Mucosa of descending colon (tissue), 3 donors: ENCODE measurements at regions of chr16 and their contacts with region 1.

Region 1: GRCh38 chr16:19886073-19886941 is 1.7 kb upstream of the GPRC5B start:
- DNase-seq: peak; percentile 61 to 89 (median 86)
- ATAC-seq: peak; percentile 80
- H3K4me3 ChIP-seq: no peak overlapping the region
- H3K4me1 ChIP-seq: peaks cover 16% of the 10 kb centered on the region
- CTCF ChIP-seq: peak; percentile 98

Region 2: GRCh38 chr16:19555162-19555937 is 331.0 kb before region 1 on chr16 and contains the start of gene VPS35L:
- intact Hi-C with region 1: loop called (anchors 5 kb)
- DNase-seq: peak; percentile 98 to 99 (median 99)
- ATAC-seq: peak; percentile 99
- H3K4me3 ChIP-seq: peak within 1 kb of the TSS; percentile 65
- H3K4me1 ChIP-seq: peaks cover 11% of the 10 kb centered on the region
- CTCF ChIP-seq: peak; percentile 76
- total RNA-seq, gene VPS35L: 47.2 to 61.7 (median 61.4) TPM

Region 3: GRCh38 chr16:19583665-19584300 is 302.5 kb before region 1 on chr16:
- intact Hi-C with region 1: loop called in 1 of 2 experiments (anchors 10 kb)
- DNase-seq: peak in 1 of 3 donors; percentile 48
- ATAC-seq: peak; percentile 87
- H3K4me3 ChIP-seq: no peak overlapping the region
- H3K4me1 ChIP-seq: no peaks in the 10 kb centered on the region
- CTCF ChIP-seq: peak; percentile 56

Region 4: GRCh38 chr16:19601083-19601976 is 285.0 kb before region 1 on chr16:
- intact Hi-C with region 1: loop called in 1 of 2 experiments (anchors 5 kb)
- DNase-seq: peak in 1 of 3 donors; percentile 58
- ATAC-seq: no peak
- H3K4me3 ChIP-seq: no peak overlapping the region
- H3K4me1 ChIP-seq: no peaks in the 10 kb centered on the region
- CTCF ChIP-seq: no peak

Region 5: GRCh38 chr16:19717771-19718602 is 168.3 kb before region 1 on chr16 and contains the starts of genes IQCK and KNOP1:
- intact Hi-C with region 1: loop called in 1 of 2 experiments (anchors 10 kb)
- DNase-seq: peak; percentile 88 to 93 (median 91)
- ATAC-seq: peak; percentile 92
- H3K4me3 ChIP-seq: peak within 1 kb of the TSS; percentile 87
- H3K4me1 ChIP-seq: peaks cover 24% of the 10 kb centered on the region
- CTCF ChIP-seq: no peak
- total RNA-seq, gene IQCK: 9.1 to 14.0 (median 12.0) TPM
- total RNA-seq, gene KNOP1: 13.1 to 23.5 (median 20.7) TPM

Region 6: GRCh38 chr16:19753815-19754643 is 132.3 kb before region 1 on chr16:
- intact Hi-C with region 1: no loop called
- DNase-seq: peak in 1 of 3 donors; percentile 23
- ATAC-seq: peak; percentile 92
- H3K4me3 ChIP-seq: no peak overlapping the region
- H3K4me1 ChIP-seq: peaks cover 9% of the 10 kb centered on the region
- CTCF ChIP-seq: no peak